ENCODE measurements at regions of chr9 and their contacts with region 1.

Region 1: GRCh38 chr9:13443346-13444244 is 164.1 kb upstream of the MPDZ start:
- DNase-seq: no peak
- H3K4me3 ChIP-seq: peak overlapping the region; percentile 23
- CTCF ChIP-seq: no peak

Region 2: DNA sequence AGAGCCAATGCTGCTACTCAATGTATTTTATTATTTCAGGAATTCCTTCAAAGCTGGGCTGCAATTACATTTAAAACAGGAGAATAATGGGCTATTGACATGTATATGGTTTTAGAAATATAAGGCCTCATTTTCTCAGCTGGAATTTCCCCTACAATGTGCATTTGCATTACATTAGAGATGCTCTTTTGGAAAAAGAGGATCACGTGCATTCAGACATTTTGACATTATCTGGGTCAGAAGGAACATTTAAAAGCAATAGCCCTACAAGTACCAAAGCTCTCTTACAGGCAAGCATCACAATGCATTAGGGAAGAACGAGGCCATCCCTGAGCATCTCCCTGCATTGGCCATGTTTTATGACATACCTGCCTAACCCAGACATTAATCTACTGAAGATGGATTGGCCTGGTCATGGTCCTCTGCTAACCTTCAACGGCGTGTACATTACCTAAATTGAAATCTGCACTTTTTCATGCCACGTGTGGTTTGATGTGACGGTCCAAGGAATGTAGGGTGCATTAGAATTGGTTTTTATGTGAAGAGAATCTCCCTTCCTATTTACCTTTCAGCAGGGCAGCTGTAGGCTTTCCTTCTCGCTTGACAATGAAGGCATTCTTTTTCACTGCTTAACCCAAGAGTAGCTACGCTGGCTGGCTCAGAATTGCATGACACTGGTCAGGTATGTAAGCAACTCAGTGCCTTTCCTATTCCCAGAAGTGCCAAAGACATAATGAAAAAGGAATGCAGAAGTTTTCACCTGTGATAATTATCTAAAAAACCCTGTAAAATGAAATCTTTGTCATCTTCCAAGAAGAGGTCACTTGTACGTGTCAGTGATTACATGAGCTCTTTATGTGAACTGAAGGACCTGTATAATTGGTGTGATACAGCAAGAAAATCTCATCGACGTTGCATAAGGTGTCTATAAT is 48.2 kb after region 1 on chr9:
- in situ Hi-C with region 1: loop called (anchors 5 kb)
- DNase-seq: no peak
- H3K4me3 ChIP-seq: no peak overlapping the region
- CTCF ChIP-seq: no peak

Measured in astrocyte of the cerebellum (primary cell).